ENCODE measurements at regions of chr19 and their contacts with region 1.

Region 1: GRCh38 chr19:12346896-12347295 is 13.5 kb upstream of the ZNF563 start:
- DNase-seq: peak in 4 of 5 donors; percentile 36 to 46 (median 42)
- H3K4me3 ChIP-seq: no peak overlapping the region
- H3K4me3 Mint-ChIP-seq: peak overlapping the region in 1 of 8 donors; percentile 3
- H3K27ac ChIP-seq: no peak overlapping the region
- H3K27ac Mint-ChIP-seq: no peak overlapping the region
- H3K4me1 ChIP-seq: no peaks in the 10 kb centered on the region
- H3K4me1 Mint-ChIP-seq: peaks cover 0 to 3% (median 0%) of the 10 kb centered on the region in 4 donors
- H3K27me3 ChIP-seq: no peaks in the 10 kb centered on the region
- H3K27me3 Mint-ChIP-seq: no peaks in the 10 kb centered on the region

Region 2: DNA sequence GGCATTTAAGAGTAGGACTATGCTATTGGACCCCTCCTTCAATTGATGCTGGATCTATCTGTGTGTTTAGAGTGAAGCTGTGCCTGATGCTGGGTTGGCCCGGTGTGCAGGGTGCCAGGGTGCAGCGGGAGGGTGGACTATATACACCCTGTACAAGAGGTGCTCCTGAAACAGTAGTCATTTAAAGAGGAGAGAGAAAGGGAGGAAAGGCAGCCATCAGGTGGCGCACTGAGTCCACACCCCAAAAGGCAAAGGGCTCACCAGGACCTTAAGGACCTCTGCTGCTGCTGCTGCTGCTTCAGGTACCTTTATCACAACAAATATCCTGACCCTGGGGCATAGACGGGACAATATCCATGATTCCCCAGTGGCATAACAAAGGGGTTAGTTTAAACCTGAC is 144.6 kb before region 1 on chr19:
- CTCF ChIA-PET with region 1: interaction called, 9 read pairs
- POLR2A ChIA-PET with region 1: no interaction called
- intact Hi-C with region 1: loop called (anchors 1 kb)
- DNase-seq: peak; percentile 41 to 57 (median 50)
- H3K4me3 ChIP-seq: no peak overlapping the region
- H3K4me3 Mint-ChIP-seq: no peak overlapping the region
- H3K27ac ChIP-seq: no peak overlapping the region
- H3K27ac Mint-ChIP-seq: no peak overlapping the region
- H3K4me1 ChIP-seq: peaks cover 8% of the 10 kb centered on the region
- H3K4me1 Mint-ChIP-seq: peaks cover 6 to 24% (median 6%) of the 10 kb centered on the region in 4 donors
- H3K27me3 ChIP-seq: no peaks in the 10 kb centered on the region
- H3K27me3 Mint-ChIP-seq: no peaks in the 10 kb centered on the region

Region 3: DNA sequence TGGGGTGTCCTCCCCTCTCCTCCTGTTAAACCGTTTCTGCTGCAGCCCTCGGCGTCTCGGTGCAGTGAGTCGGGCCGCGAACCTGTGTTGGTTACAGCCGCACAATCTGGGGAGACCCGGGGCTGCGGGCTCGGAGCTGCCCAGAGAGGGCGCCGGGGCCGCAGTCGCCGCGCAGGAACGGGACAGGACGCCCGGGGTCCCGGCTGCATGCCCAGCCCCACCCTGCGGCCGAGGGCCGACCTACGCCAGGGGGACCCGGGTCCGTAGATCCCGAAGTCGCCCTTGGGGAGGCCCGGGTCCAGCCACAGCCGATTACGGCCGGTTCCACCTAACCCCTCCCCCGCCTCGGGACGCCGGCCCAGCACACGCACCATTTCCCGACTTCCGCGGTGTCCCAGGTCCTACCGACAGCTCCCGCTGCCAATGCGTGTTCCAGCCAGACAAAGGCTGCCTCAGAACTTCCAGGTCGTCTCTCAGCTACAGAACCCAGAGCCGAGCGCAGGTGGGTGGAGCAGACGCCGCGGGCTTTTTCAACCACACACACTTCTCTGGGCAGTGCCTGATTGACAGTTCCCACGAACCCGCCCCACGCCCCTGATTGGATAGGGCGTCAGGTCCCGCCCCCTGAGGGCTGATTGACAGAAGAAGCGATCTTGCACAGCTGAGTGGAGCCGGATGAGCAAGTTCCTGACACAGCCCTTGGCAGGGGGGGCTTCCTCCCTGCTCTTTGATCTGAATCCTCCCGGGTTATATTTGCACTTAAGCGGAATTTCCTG is 93.8 kb after region 1 on chr19 and contains the start of gene ZNF443:
- CTCF ChIA-PET with region 1: no interaction called
- POLR2A ChIA-PET with region 1: no interaction called
- intact Hi-C with region 1: no loop called
- DNase-seq: peak; percentile 97 to 99 (median 98)
- H3K4me3 ChIP-seq: peak within 1 kb of the TSS; percentile 52 to 76
- H3K4me3 Mint-ChIP-seq: peak within 1 kb of the TSS; percentile 99 to 100 (median 100)
- H3K27ac ChIP-seq: peak within 1 kb of the TSS; percentile 57
- H3K27ac Mint-ChIP-seq: peak within 1 kb of the TSS; percentile 94 to 99 (median 96)
- H3K4me1 ChIP-seq: peaks cover 4% of the 10 kb centered on the region
- H3K4me1 Mint-ChIP-seq: peaks cover 7 to 26% (median 17%) of the 10 kb centered on the region in 4 donors
- H3K27me3 ChIP-seq: no peaks in the 10 kb centered on the region
- H3K27me3 Mint-ChIP-seq: no peaks in the 10 kb centered on the region
- total RNA-seq, gene ZNF443: 9.9 to 10.3 TPM

Region 4: GRCh38 chr19:12551060-12551832 is 204.3 kb after region 1 on chr19 and contains the start of gene ZNF564:
- CTCF ChIA-PET with region 1: no interaction called
- POLR2A ChIA-PET with region 1: no interaction called
- intact Hi-C with region 1: no loop called
- DNase-seq: peak; percentile 94 to 98 (median 95)
- H3K4me3 ChIP-seq: peak within 1 kb of the TSS; percentile 44 to 98
- H3K4me3 Mint-ChIP-seq: peak within 1 kb of the TSS; percentile 92 to 100 (median 98)
- H3K27ac ChIP-seq: peak within 1 kb of the TSS; percentile 83
- H3K27ac Mint-ChIP-seq: peak within 1 kb of the TSS; percentile 91 to 99 (median 97)
- H3K4me1 ChIP-seq: peaks cover 42% of the 10 kb centered on the region
- H3K4me1 Mint-ChIP-seq: peaks cover 28 to 56% (median 39%) of the 10 kb centered on the region in 4 donors
- H3K27me3 ChIP-seq: no peaks in the 10 kb centered on the region
- H3K27me3 Mint-ChIP-seq: no peaks in the 10 kb centered on the region
- total RNA-seq, gene ZNF564: 29.2 to 30.6 TPM